ENCODE measurements at regions of chr4 and their contacts with region 1.

Region 1: DNA sequence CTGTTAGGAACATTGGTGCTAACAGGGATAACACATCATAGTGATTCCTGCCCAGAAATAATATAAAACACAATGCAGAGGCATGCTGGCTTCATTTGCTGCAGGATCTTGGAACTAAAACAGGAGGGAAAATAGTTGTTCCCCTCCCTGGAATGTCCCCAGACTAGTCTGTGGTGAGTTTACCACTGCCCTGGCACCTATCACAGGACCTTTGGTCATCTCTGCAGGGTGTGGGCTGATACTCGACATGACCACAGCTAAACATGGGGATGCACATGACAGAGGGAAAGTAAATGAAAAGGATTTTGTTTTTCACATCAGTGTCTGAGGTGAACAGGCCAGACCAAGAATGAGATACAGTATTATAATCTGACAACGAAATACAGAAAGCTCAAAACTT is 160.2 kb upstream of the DKK2 start:
- ATAC-seq: no peak
- H3K4me3 ChIP-seq: no peak overlapping the region
- H3K27ac ChIP-seq: no peak overlapping the region
- H3K4me1 ChIP-seq: no peaks in the 10 kb centered on the region

Region 2: GRCh38 chr4:107379054-107379869 is 182.9 kb after region 1 on chr4:
- in situ Hi-C with region 1: loop called in 1 of 9 experiments (anchors 10 kb)
- ATAC-seq: peak in 3 of 8 experiments; percentile 34 to 85 (median 71)
- H3K4me3 ChIP-seq: no peak overlapping the region
- H3K27ac ChIP-seq: no peak overlapping the region
- H3K4me1 ChIP-seq: no peaks in the 10 kb centered on the region

Measured in motor neuron (in vitro differentiated cells).